Body of pancreas (tissue), 4 donors: ENCODE measurements at regions of chr7 and their contacts with region 1.

Region 1: GRCh38 chr7:95675016-95675415 is 78.7 kb upstream of the PDK4 start:
- DNase-seq: no peak
- ATAC-seq: no peak
- H3K4me3 ChIP-seq: no peak overlapping the region
- H3K27ac ChIP-seq: no peak overlapping the region
- H3K4me1 ChIP-seq: no peaks in the 10 kb centered on the region
- H3K27me3 ChIP-seq: no peaks in the 10 kb centered on the region
- CTCF ChIP-seq: no peak
- POLR2A ChIP-seq: no peak

Region 2: DNA sequence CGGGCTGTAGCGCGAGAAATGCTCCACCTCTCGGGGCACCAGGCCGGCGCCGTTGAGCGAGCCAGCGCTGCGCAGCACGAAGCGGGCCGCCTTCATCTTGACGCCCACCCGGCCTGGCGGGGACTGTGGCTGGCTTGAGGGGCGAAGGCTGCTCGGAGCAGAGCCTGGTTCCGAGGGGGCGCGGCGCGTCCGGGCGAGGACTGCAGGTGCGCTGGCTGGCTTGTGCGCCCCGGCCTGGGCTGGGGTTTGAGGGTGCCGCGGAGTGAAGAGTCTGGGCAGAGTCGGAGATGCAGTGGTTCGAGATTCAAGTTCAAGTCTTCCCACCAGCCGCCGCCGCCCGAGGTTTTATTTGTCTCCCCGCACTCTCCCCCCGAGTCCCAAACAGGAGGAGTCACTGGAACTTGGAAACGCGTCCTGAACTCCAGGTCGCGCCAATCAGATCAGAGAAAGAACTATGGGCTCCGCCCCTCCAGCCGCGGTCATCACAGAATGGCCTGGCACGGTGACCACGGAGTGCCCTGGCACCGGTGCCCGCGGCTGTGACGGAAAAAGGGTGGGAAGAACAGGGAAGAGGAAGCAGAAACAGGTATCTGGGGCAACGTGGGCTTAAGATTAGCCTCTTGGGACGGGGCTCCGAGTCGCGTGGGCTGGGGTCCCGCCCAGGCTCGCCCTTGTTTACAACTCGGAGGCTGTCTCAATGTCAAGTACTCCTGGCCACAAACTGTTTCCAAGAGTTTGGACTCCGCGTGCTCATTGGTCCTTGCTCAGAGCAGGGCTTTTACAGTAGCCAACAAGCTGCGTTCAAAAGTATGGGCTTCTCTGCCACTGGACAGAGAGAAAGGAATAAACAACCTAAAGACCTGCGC is 78.6 kb before region 1 on chr7 and contains the start of gene PDK4:
- intact Hi-C with region 1: loop called (anchors 10 kb)
- DNase-seq: peak; percentile 97 to 99 (median 98)
- ATAC-seq: peak; percentile 94
- H3K4me3 ChIP-seq: peak within 1 kb of the TSS; percentile 24 to 30
- H3K27ac ChIP-seq: peak within 1 kb of the TSS; percentile 90 to 99 (median 97)
- H3K4me1 ChIP-seq: peaks cover 60% of the 10 kb centered on the region
- H3K27me3 ChIP-seq: no peaks in the 10 kb centered on the region
- CTCF ChIP-seq: peak in 1 of 7 experiments; percentile 5
- POLR2A ChIP-seq: peak; percentile 96 to 99 (median 97)
- total RNA-seq, gene PDK4: 234 to 308 TPM